GM12878 (cell line): ENCODE measurements at regions of chr10 and their contacts with region 1.

Region 1: DNA sequence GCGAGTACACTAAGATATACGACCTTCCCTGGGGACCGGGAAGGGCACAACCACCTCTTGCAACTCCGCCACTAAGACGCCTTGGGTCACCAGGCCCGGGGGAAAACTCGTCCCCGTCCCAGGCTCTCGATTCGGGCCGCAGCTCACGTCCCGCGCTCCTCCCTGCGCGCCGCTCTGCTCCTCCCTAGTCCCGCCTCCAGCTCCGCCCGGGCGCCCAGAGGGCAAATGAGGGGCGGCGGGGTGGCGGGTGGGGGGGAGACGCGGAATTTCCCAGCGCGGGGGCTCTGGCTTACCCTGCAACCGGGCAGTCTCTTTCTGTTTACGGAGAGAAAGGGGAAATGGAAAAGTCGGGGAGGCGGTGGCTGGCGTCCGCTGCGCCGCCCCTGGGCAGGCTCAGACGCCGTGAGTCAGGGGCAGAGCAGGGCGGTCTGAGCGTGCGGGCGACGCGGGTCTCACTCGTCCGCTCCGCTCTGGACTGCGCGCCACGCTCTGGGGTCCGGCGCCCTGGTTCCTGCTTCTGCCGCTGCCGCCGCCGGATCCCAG is at the start of gene MAP3K8:
- DNase-seq: peak; percentile 84
- ATAC-seq: peak; percentile 72
- H3K4me3 ChIP-seq: peak within 1 kb of the TSS; percentile 100
- H3K27ac ChIP-seq: peak within 1 kb of the TSS; percentile 91
- H3K4me1 ChIP-seq: peaks cover 25% of the 10 kb centered on the region
- H3K27me3 ChIP-seq: no peaks in the 10 kb centered on the region
- CTCF ChIP-seq: no peak
- EP300 ChIP-seq: no peak; a peak in 1 of 4 replicates
- POLR2A ChIP-seq: peak; percentile 82
- RAD21 ChIP-seq: 0 out of 2 replicates have a peak, but pooled peaks have one; percentile 11
- polyA plus RNA-seq, gene MAP3K8: 45.5 to 47.9 TPM

Region 2: GRCh38 chr10:29857843-29858701 is 575.7 kb before region 1 on chr10:
- CTCF ChIA-PET with region 1: no interaction called
- POLR2A ChIA-PET with region 1: no interaction called
- RAD21 ChIA-PET with region 1: no interaction called
- SMC1A ChIA-PET with region 1: no interaction called
- in situ Hi-C with region 1: no loop called
- intact Hi-C with region 1: no loop called
- DNase-seq: no peak
- ATAC-seq: no peak
- H3K4me3 ChIP-seq: no peak overlapping the region
- H3K27ac ChIP-seq: no peak overlapping the region
- H3K4me1 ChIP-seq: no peaks in the 10 kb centered on the region
- H3K27me3 ChIP-seq: peaks cover 0 to 3% of the 10 kb centered on the region in 2 experiments; a peak in 1 of 4 replicates
- CTCF ChIP-seq: peak in 1 of 3 experiments; percentile 18; a peak in 2 of 6 replicates
- EP300 ChIP-seq: no peak
- POLR2A ChIP-seq: no peak
- RAD21 ChIP-seq: no peak

Region 3: DNA sequence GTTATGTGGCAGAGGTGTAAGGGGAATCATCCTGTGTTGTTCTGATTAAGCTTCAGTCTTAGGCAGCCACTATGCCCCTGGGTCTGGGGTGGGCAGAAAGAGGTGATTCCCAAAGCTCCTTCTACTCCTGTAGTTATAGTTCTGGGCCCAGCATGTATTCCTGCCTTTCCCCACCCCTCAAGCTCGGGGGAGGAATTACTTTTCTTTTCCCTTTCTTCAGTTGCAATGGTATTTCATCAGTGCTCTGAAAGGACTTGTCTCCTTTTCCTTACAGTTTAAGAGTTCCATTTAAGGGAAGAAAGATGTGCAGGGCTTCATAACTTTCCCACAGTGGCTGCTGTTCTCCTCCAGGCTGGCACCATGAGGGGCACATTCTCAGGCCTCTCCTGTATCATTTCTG is 178.9 kb before region 1 on chr10:
- CTCF ChIA-PET with region 1: no interaction called
- POLR2A ChIA-PET with region 1: no interaction called
- RAD21 ChIA-PET with region 1: no interaction called
- SMC1A ChIA-PET with region 1: no interaction called
- in situ Hi-C with region 1: no loop called
- intact Hi-C with region 1: no loop called
- DNase-seq: no peak
- ATAC-seq: no peak
- H3K4me3 ChIP-seq: no peak overlapping the region
- H3K27ac ChIP-seq: no peak overlapping the region
- H3K4me1 ChIP-seq: no peaks in the 10 kb centered on the region
- H3K27me3 ChIP-seq: no peaks in the 10 kb centered on the region
- CTCF ChIP-seq: no peak
- EP300 ChIP-seq: no peak
- POLR2A ChIP-seq: no peak
- RAD21 ChIP-seq: no peak

Region 4: GRCh38 chr10:30284865-30285594 is 148.8 kb before region 1 on chr10:
- CTCF ChIA-PET with region 1: no interaction called
- POLR2A ChIA-PET with region 1: no interaction called
- RAD21 ChIA-PET with region 1: no interaction called
- SMC1A ChIA-PET with region 1: no interaction called
- in situ Hi-C with region 1: no loop called
- intact Hi-C with region 1: no loop called
- DNase-seq: peak; percentile 42
- ATAC-seq: peak; percentile 93
- H3K4me3 ChIP-seq: peak overlapping the region; percentile 34; the same call in 1 of the 2 replicates
- H3K27ac ChIP-seq: peak overlapping the region; percentile 45
- H3K4me1 ChIP-seq: peaks cover 19% of the 10 kb centered on the region
- H3K27me3 ChIP-seq: no peaks in the 10 kb centered on the region
- CTCF ChIP-seq: no peak
- EP300 ChIP-seq: no peak
- POLR2A ChIP-seq: no peak
- RAD21 ChIP-seq: no peak

Region 5: GRCh38 chr10:30413996-30414576 is 19.7 kb before region 1 on chr10:
- CTCF ChIA-PET with region 1: interaction called, 31 read pairs
- POLR2A ChIA-PET with region 1: interaction called, 132 read pairs
- RAD21 ChIA-PET with region 1: interaction called, 255 read pairs
- SMC1A ChIA-PET with region 1: interaction called, 262 read pairs
- in situ Hi-C with region 1: no loop called
- intact Hi-C with region 1: loop called (anchors 1 kb)
- DNase-seq: no peak
- ATAC-seq: peak; percentile 71
- H3K4me3 ChIP-seq: no peak overlapping the region
- H3K27ac ChIP-seq: no peak overlapping the region
- H3K4me1 ChIP-seq: peaks cover 28% of the 10 kb centered on the region
- H3K27me3 ChIP-seq: no peaks in the 10 kb centered on the region
- CTCF ChIP-seq: peak; percentile 78 to 87 (median 84)
- EP300 ChIP-seq: no peak
- POLR2A ChIP-seq: no peak
- RAD21 ChIP-seq: peak; percentile 97

Region 6: GRCh38 chr10:30447125-30447799 is 13.5 kb after region 1 on chr10:
- CTCF ChIA-PET with region 1: interaction called, 7 read pairs
- POLR2A ChIA-PET with region 1: interaction called, 4 read pairs
- RAD21 ChIA-PET with region 1: interaction called, 3 read pairs
- SMC1A ChIA-PET with region 1: interaction called, 23 read pairs
- in situ Hi-C with region 1: no loop called
- intact Hi-C with region 1: no loop called
- DNase-seq: no peak
- ATAC-seq: peak; percentile 35
- H3K4me3 ChIP-seq: no peak overlapping the region
- H3K27ac ChIP-seq: no peak overlapping the region
- H3K4me1 ChIP-seq: peaks cover 13% of the 10 kb centered on the region
- H3K27me3 ChIP-seq: no peaks in the 10 kb centered on the region
- CTCF ChIP-seq: no peak
- EP300 ChIP-seq: no peak
- POLR2A ChIP-seq: no peak
- RAD21 ChIP-seq: no peak

Region 7: GRCh38 chr10:30467651-30468338 is 34.0 kb after region 1 on chr10:
- CTCF ChIA-PET with region 1: interaction called, 7 read pairs
- POLR2A ChIA-PET with region 1: interaction called, 7 read pairs
- RAD21 ChIA-PET with region 1: interaction called, 7 read pairs
- SMC1A ChIA-PET with region 1: interaction called, 23 read pairs
- in situ Hi-C with region 1: no loop called
- intact Hi-C with region 1: no loop called
- DNase-seq: no peak
- ATAC-seq: peak; percentile 94
- H3K4me3 ChIP-seq: no peak overlapping the region
- H3K27ac ChIP-seq: peak overlapping the region; percentile 62
- H3K4me1 ChIP-seq: peaks cover 11% of the 10 kb centered on the region
- H3K27me3 ChIP-seq: no peaks in the 10 kb centered on the region
- CTCF ChIP-seq: no peak
- EP300 ChIP-seq: no peak
- POLR2A ChIP-seq: no peak
- RAD21 ChIP-seq: no peak

Region 8: GRCh38 chr10:30493609-30494530 is 60.1 kb after region 1 on chr10:
- CTCF ChIA-PET with region 1: interaction called, 8 read pairs
- POLR2A ChIA-PET with region 1: interaction called, 22 read pairs
- RAD21 ChIA-PET with region 1: interaction called, 22 read pairs
- SMC1A ChIA-PET with region 1: interaction called, 51 read pairs
- in situ Hi-C with region 1: no loop called
- intact Hi-C with region 1: loop called (anchors 5 kb)
- DNase-seq: no peak
- ATAC-seq: peak; percentile 63
- H3K4me3 ChIP-seq: peak overlapping the region; percentile 40; the same call in 1 of the 2 replicates
- H3K27ac ChIP-seq: peak overlapping the region; percentile 87
- H3K4me1 ChIP-seq: peaks cover 88% of the 10 kb centered on the region
- H3K27me3 ChIP-seq: no peaks in the 10 kb centered on the region
- CTCF ChIP-seq: peak; percentile 20 to 45 (median 37); a peak in 5 of 6 replicates
- EP300 ChIP-seq: peak; percentile 35 to 80; a peak in 1 of 4 replicates
- POLR2A ChIP-seq: no peak
- RAD21 ChIP-seq: peak; percentile 37; the same call in 1 of the 2 replicates

Region 9: GRCh38 chr10:30510169-30510930 is 76.5 kb after region 1 on chr10:
- CTCF ChIA-PET with region 1: interaction called, 4 read pairs
- POLR2A ChIA-PET with region 1: interaction called, 6 read pairs
- RAD21 ChIA-PET with region 1: interaction called, 11 read pairs
- SMC1A ChIA-PET with region 1: interaction called, 19 read pairs
- in situ Hi-C with region 1: no loop called
- intact Hi-C with region 1: no loop called
- DNase-seq: no peak
- ATAC-seq: peak; percentile 95
- H3K4me3 ChIP-seq: 0 out of 2 replicates have a peak overlapping the region, but pooled peaks have one; percentile 23
- H3K27ac ChIP-seq: peak overlapping the region; percentile 85
- H3K4me1 ChIP-seq: peaks cover 29% of the 10 kb centered on the region
- H3K27me3 ChIP-seq: no peaks in the 10 kb centered on the region
- CTCF ChIP-seq: peak in 2 of 3 experiments; percentile 7 to 23; a peak in 1 of 6 replicates
- EP300 ChIP-seq: no peak
- POLR2A ChIP-seq: no peak
- RAD21 ChIP-seq: no peak

Region 10: DNA sequence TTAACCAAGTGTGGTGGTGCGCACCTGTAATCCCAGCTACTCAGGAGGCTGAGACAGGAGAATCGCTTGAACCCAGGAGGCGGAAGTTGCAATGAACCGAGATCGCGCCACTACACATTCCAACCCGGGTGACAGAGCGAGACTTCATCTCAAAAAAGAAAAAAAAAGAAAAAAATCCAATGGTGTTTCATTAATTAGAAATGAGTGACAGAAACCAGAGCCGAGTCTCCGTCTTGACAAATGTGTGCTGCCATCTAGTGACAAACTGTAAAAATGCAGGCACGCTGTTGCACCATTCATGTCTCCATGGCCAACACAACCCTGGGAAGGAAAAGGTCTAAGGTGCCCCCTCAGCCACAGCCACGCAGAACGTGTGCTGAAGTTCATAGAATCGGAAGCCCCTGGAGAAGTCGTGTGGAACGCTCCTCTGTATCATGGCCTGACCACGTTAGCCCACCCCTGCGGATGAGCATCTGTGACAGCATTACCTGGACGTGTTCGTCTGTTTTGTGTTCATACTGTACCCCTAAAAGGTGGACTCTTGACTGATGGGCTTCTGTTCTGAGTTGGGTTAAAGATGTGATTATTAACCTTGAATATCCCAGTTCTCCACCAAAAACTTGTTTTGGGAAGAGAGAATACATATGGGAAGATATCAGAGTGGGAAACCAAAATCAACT is 100.8 kb after region 1 on chr10:
- CTCF ChIA-PET with region 1: interaction called, 123 read pairs
- POLR2A ChIA-PET with region 1: interaction called, 113 read pairs
- RAD21 ChIA-PET with region 1: interaction called, 48 read pairs
- SMC1A ChIA-PET with region 1: interaction called, 284 read pairs
- in situ Hi-C with region 1: no loop called
- intact Hi-C with region 1: loop called (anchors 1 kb)
- DNase-seq: no peak
- ATAC-seq: peak; percentile 56
- H3K4me3 ChIP-seq: no peak overlapping the region
- H3K27ac ChIP-seq: no peak overlapping the region
- H3K4me1 ChIP-seq: peaks cover 6% of the 10 kb centered on the region
- H3K27me3 ChIP-seq: no peaks in the 10 kb centered on the region
- CTCF ChIP-seq: peak; percentile 80 to 88 (median 84)
- EP300 ChIP-seq: no peak
- POLR2A ChIP-seq: no peak
- RAD21 ChIP-seq: peak; percentile 96